ENCODE measurements at regions of chr7 and their contacts with region 1.

Region 1: DNA sequence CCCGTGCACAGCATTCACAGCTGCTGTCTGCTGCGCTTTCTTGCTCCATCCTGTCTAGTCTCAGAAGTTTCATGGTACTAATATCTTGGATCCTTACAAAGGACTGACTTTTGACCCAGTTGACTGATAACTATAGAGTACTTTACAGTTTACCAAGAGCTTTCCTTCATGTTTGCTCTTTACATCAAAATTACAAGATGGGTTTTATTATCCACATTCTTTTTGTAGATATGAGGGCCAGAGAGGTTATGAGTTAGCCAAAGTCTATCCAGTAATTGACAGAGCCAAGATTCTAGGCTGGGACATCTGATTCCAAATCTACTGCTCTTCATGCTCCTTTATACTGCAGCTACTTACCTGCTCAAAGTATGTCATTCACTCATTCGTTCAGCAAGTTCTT is 218.2 kb downstream of the AUTS2 start:
- DNase-seq: no peak

Region 2: DNA sequence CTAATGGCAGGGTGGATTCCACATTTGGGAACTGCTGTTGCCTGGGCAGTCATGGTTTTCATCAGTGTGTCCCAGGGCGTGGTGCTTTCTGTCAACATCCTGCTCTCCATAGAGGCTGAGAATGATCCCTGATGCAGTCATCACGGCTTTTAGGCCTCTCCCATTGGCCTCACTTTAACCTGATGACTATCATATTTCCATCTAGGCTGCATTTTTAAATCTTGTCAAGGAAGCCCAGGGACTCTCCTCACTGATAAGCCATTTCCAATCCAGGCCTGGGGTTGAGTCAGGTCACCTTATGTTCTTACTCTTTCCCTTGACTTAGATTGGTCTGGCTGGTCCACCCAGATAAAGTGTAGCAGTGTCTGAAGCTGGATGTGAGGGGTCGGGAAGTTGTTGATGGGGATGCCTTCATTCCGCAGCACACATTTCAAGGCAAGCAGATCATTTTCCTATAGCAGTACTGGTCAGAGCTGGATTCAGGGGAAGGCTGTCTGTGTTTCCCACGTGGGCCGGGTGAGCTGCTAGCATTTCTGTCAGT is 41.2 kb before region 1 on chr7:
- intact Hi-C with region 1: no loop called
- DNase-seq: peak; percentile 82

Region 3: DNA sequence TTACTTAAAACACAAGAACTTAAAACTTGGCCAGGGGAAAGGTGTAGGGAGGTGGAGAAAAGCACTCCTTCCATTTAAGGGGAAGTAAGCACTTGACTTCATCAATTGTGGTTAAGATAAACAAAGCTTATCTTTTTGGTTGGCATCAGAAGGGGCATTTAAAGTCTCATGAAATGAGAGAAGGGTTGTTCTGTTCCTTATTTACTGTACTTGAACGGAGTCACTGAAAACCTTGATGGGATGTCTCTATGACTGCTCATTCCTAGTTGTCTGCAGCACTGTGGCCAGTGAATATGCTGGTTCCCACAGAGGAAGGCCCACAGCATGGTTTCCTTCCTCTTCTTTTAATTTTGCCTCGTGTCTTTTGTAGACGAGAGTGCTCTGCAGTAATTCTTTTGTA is 11.1 kb after region 1 on chr7:
- intact Hi-C with region 1: loop called in 1 of 2 experiments (anchors 1 kb)
- DNase-seq: no peak

Region 4: GRCh38 chr7:69934144-69934903 is 117.8 kb after region 1 on chr7:
- intact Hi-C with region 1: no loop called
- DNase-seq: no peak

Region 5: DNA sequence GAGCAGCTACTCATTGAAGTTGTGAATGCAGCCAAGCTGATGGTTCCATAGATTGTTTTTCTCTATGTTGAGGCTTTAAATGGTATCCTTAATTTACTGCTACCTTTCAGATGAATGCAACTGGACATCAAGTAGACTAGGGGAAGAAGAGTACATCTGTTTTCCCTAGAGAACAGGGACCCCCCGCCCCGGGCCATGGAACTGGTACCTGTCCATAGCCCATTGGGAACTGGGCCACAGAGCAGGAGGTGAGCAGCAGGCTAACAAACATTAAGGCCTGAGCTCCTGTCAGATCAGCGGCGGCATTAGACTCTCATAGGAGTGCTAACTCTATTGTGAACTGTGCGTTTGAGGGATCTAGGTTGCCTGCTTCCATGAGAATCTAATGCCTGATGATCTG is 173.1 kb after region 1 on chr7:
- intact Hi-C with region 1: no loop called
- DNase-seq: no peak